Esophagus muscularis mucosa (tissue), 4 donors: ENCODE measurements at regions of chr19 and their contacts with region 1.

Region 1: GRCh38 chr19:6297202-6297601 is 17.4 kb upstream of the MLLT1 start:
- DNase-seq: no peak
- H3K4me3 ChIP-seq: no peak overlapping the region
- H3K27ac ChIP-seq: no peak overlapping the region
- H3K4me1 ChIP-seq: no peaks in the 10 kb centered on the region
- H3K27me3 ChIP-seq: peaks cover 0 to 6% (median 0%) of the 10 kb centered on the region in 4 donors
- CTCF ChIP-seq: no peak
- EP300 ChIP-seq: no peak
- POLR2A ChIP-seq: no peak

Region 2: DNA sequence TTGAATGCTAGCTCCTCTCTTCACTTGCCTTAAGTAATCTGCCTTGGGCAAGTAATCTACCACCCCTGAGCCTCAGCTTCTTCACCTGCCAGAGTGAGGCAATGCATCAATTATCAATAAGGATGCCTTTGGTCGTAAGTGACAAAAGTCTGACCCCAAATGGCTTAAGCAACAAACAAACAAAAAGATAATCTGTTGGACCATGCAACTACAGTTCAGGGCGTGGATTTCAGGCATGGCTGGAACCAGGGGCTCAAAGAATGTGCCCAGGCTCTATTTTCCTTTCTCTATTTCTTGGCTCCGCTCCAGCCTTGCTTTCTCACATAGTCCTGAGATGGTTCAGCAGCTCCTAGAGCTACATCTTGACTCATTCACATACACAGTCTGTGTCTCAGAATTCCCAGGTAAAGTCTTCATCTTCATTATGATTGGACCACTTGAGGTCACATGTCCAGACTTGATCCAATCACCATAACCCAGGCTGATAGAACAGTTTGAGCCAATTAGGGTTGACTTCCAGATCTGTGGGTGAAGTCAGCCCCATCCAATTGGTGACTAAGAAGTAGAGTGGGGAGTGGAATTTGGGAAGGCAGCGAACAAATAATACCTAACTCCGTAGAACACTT is 132.2 kb before region 1 on chr19:
- intact Hi-C with region 1: loop called (anchors 5 kb)
- DNase-seq: no peak
- H3K4me3 ChIP-seq: no peak overlapping the region
- H3K27ac ChIP-seq: no peak overlapping the region
- H3K4me1 ChIP-seq: no peaks in the 10 kb centered on the region
- H3K27me3 ChIP-seq: no peaks in the 10 kb centered on the region
- CTCF ChIP-seq: no peak
- EP300 ChIP-seq: no peak
- POLR2A ChIP-seq: no peak

Region 3: DNA sequence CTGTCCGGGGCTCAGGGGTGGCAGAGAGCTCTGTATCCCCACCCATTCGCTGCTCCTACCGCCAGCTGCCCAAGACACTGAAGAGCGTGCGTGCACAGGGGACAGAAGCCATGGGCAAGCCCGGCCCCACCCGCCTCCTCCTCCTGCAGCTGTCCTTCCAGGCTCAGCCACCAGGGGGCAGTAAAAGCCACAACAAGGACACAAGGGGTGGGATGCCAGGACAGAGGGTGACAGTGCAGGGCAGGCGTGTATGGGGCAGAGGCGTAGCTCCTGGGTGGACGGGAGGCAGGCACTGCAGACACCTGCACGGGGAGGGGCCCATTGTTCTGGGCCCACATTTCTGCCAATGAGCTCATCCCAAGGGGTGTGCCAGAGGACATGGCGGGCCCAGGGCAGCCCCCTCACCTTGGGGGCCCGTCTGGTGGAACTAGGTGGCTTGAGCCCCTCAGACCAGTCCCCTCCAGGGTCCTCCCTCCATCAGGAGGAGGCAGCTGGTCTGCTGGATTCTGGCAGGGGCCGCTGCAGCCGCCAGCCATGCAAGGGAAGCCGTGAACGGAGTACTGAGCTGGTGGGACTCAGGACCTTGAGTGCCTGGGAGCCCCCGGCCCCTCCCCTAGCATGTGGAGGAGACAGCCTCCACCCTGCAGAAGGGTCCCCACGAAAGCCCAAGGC is 78.6 kb before region 1 on chr19:
- intact Hi-C with region 1: loop called (anchors 1 kb)
- DNase-seq: peak; percentile 96
- H3K4me3 ChIP-seq: no peak overlapping the region
- H3K27ac ChIP-seq: peak overlapping the region in 3 of 4 donors; percentile 34 to 51 (median 51)
- H3K4me1 ChIP-seq: peaks cover 48 to 82% (median 55%) of the 10 kb centered on the region in 4 donors
- H3K27me3 ChIP-seq: no peaks in the 10 kb centered on the region
- CTCF ChIP-seq: peak in 2 of 3 experiments; percentile 97 to 99
- EP300 ChIP-seq: no peak
- POLR2A ChIP-seq: no peak